Ascending aorta (tissue), 2 donors: ENCODE measurements at regions of chr15 and their contacts with region 1.

Region 1: DNA sequence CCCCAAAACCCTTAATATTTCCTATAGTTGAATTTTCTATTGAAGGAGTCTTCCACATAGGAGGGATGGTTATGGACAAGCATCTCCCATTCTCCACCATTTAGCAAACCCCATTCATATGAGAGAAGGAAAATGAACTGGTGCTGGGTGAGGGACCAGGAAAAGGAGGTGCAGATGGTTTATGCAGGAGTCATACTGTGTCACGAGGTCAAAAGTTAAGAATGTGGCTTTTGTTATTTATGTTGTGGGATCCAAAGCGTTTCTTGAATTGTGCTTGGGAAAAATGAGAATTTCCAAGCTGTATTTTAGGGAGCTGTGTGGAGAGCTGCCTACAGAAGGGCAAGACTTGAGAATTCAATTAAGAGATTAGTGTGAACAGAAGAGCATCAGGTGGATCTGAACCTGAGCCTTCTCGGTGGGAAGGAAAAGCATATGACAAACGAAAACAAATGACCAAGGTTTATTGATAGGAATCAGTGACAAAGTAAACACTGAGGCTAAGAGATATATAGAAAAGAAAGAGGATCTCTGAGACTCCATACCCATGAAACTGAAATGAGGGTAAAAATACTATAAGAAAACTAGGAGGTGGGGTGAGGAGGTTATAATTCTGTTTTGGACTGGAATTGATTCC is 473.3 kb upstream of the NR2F2 start:
- DNase-seq: no peak
- H3K4me3 ChIP-seq: no peak overlapping the region
- H3K27ac ChIP-seq: no peak overlapping the region
- H3K4me1 ChIP-seq: no peaks in the 10 kb centered on the region
- H3K27me3 ChIP-seq: no peaks in the 10 kb centered on the region
- CTCF ChIP-seq: no peak

Region 2: DNA sequence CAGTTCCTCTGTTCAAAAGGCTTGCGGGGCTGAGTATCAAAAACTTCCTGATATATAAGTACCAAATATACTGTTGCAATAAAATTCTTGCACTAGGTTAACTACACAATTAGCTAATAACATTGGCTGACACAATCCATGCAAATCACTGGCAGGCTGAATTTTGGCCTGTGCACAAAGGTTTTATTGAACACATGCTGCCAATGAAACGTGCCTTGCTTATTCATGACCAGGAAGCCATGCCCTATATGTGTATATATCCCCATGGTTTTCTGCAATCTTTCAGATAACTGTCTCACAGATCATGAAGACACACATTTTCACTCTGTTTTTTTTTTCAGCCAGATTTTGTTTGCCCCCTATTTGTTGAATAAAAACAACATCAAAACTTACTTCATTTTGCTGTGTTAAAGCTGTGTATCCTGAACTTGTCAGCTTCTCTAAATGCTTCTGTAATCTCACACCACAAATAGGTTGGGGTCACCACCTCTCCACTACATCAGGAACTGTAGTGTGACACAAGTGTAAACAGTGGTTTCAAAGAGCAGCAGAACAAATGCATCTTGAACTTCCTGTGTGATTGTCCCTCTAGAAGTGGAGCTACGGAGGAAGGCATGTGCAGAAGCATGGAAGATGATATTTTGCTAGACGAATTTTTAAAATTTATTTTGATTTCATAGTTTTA is 447.5 kb before region 1 on chr15:
- intact Hi-C with region 1: loop called (anchors 10 kb)
- DNase-seq: no peak
- H3K4me3 ChIP-seq: no peak overlapping the region
- H3K27ac ChIP-seq: peak overlapping the region in 1 of 2 donors; percentile 39
- H3K4me1 ChIP-seq: peaks cover 0 to 33% of the 10 kb centered on the region in 2 donors
- H3K27me3 ChIP-seq: no peaks in the 10 kb centered on the region
- CTCF ChIP-seq: no peak

Region 3: DNA sequence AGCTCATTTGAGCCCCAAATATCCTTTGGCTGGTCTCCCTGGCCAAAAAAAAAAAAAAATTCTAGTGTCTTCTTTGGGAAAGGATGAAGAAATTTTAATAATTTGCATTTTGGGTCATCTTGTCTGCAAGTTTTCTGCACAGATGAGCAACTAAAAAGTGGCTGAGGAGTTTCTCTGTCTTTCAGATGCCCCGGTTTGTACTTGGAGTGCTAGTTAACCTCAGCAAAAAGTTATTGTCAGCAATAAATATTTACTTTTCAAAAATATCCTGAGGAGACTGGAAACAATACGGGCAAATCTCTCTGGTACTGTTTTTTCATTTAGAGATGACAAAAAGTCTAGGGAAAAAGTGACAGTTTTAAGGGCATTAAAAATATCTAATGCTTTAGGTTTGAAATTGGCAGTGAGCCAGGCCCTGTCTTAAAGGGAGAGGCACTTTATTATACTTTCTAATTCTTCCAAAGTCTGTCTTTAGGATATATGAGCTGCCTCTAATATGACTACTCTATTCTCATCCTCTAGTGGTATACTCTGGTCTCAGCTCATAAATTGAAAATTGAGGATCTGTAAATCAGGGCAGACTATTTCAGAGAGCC is 37.2 kb after region 1 on chr15:
- intact Hi-C with region 1: no loop called
- DNase-seq: no peak
- H3K4me3 ChIP-seq: no peak overlapping the region
- H3K27ac ChIP-seq: no peak overlapping the region
- H3K4me1 ChIP-seq: no peaks in the 10 kb centered on the region
- H3K27me3 ChIP-seq: no peaks in the 10 kb centered on the region
- CTCF ChIP-seq: no peak